Thyroid gland (tissue), 4 donors: ENCODE measurements at regions of chr10 and their contacts with region 1.

Region 1: DNA sequence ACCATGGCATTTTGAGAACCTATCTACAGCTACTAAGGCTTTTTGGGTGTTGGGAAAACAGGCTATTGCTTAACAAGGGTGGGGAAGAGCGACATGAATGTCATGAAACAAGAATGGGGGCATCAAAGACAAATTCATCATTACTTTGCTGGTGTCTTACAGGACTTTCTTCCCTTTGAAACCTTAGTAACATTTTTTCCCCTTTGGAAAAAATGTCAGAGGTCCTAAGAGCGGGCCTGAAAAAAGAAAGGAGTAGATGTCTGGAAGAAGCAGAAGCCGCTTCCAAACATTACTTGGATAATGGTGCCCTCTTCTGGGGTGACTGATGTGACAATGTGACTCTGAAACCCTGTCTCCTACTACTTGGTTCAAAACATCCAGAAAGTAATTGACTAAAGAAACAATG is 3.8 kb upstream of the DDX50 start:
- DNase-seq: peak; percentile 51 to 56
- H3K4me3 ChIP-seq: no peak overlapping the region
- H3K27ac ChIP-seq: no peak overlapping the region
- H3K4me1 ChIP-seq: peaks cover 6 to 7% of the 10 kb centered on the region in 2 donors
- H3K27me3 ChIP-seq: no peaks in the 10 kb centered on the region
- CTCF ChIP-seq: peak in 4 of 6 experiments; percentile 62 to 74 (median 68)
- POLR2A ChIP-seq: no peak

Region 2: GRCh38 chr10:68550747-68551411 is 346.5 kb before region 1 on chr10:
- intact Hi-C with region 1: loop called (anchors 10 kb)
- DNase-seq: peak; percentile 58
- H3K4me3 ChIP-seq: no peak overlapping the region
- H3K27ac ChIP-seq: no peak overlapping the region
- H3K4me1 ChIP-seq: no peaks in the 10 kb centered on the region
- H3K27me3 ChIP-seq: no peaks in the 10 kb centered on the region
- CTCF ChIP-seq: peak; percentile 74 to 90 (median 76)
- POLR2A ChIP-seq: no peak

Region 3: GRCh38 chr10:68792115-68792514 is 105.2 kb before region 1 on chr10:
- intact Hi-C with region 1: loop called (anchors 10 kb)
- DNase-seq: no peak
- H3K4me3 ChIP-seq: no peak overlapping the region
- H3K27ac ChIP-seq: no peak overlapping the region
- H3K4me1 ChIP-seq: no peaks in the 10 kb centered on the region
- H3K27me3 ChIP-seq: no peaks in the 10 kb centered on the region
- CTCF ChIP-seq: peak in 3 of 6 experiments; percentile 23 to 37 (median 34)
- POLR2A ChIP-seq: no peak

Region 4: DNA sequence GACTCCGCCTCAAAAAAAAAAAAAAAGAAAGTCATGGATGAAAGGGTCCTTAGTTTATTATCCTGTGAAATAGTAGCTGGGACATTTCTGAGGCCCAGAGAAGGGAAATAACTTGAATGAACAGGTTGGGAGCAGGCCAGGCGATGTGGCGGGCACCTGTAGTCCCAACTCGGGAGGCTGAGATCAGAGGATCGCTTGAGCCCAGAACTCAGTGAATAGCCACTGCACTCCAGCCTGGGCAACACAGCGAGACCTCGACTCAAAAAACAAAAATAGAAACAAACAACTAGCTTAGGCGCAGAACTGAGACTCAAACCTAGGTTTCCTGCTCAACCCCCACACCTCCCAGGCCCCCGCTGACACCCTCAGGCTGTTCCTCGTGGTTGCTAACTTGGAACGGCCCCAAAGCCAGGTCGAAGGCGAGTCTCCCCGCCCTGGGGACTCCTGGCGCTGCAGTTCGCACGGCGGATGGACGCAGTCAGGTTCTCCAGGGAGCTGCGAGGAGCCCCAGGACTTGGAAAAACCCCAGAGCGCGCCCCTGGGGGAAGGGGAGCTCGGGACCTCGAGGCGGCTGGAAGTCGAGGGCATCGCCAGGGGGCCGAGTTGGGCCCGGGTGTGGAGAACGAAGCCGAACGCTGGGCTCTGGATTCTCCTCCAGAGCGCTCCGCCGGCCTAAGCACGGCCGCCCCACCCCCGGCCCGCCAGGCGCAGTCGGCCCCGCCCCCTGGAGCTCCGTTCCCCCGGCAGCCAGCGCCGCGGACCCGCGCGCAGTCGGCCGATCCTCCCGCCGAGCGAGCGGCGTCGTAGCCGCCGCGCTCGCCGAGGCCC is 70.4 kb before region 1 on chr10 and contains the start of gene STOX1:
- intact Hi-C with region 1: loop called (anchors 5 kb)
- DNase-seq: peak; percentile 70
- H3K4me3 ChIP-seq: peak within 1 kb of the TSS in 2 of 3 donors; percentile 18 to 42
- H3K27ac ChIP-seq: peak within 1 kb of the TSS in 2 of 3 donors; percentile 37 to 60
- H3K4me1 ChIP-seq: peaks cover 4 to 5% of the 10 kb centered on the region in 2 donors
- H3K27me3 ChIP-seq: no peaks in the 10 kb centered on the region
- CTCF ChIP-seq: peak in 1 of 6 experiments; percentile 13
- POLR2A ChIP-seq: peak in 1 of 2 donors; percentile 43
- total RNA-seq, gene STOX1: 8.5 to 14.9 (median 10.0) TPM